ENCODE measurements at regions of chr17 and their contacts with region 1.

Region 1: DNA sequence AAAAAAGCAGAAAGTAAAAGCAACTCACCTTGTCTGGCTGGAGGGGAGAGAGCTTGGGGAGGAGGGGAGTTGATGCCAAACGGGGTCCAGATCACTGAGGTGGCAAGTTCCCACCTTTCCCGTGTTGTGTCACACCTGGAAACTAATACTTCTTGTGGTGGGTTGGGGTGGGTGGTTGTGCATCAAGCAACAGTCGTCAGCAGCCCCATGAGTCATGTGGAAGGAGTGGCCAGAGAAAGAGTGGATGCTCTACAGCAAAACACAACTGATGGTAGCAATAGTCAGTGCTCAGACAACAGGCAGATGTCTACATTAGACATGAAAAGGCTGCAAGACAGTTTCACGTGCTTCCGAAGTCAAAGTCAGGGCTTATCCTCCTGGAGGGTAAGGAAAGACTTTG is 35.4 kb downstream of the ARSG start:
- DNase-seq: no peak
- ATAC-seq: no peak
- H3K4me3 ChIP-seq: no peak overlapping the region
- H3K4me3 Mint-ChIP-seq: no peak overlapping the region
- H3K27ac ChIP-seq: no peak overlapping the region
- H3K27ac Mint-ChIP-seq: no peak overlapping the region
- H3K4me1 ChIP-seq: peaks cover 0 to 14% of the 10 kb centered on the region in 2 experiments
- H3K4me1 Mint-ChIP-seq: peaks cover 23 to 35% (median 26%) of the 10 kb centered on the region in 3 donors
- H3K27me3 ChIP-seq: peaks cover 0 to 4% of the 10 kb centered on the region in 2 experiments
- H3K27me3 Mint-ChIP-seq: no peaks in the 10 kb centered on the region

Region 2: DNA sequence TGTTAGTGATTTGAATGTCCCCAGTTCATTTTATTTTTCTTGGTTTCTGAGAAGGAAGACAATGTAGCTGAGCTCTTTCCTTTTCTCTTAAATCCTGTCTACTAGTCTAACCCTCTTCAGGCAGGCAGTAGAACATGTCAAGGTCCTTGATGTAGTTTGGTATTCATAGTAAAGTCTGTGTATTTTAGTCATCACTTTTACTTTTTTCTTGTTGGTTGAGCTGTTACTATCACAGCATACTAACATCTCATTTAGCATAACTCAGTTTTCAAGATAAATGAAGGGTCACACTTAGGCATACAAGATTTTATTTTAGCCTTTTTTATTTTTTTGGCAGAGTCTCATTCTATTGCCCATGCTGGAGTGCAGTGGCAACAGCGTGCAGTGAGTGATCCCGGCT is 220.6 kb before region 1 on chr17:
- CTCF ChIA-PET with region 1: no interaction called
- POLR2A ChIA-PET with region 1: interaction called in 1 of 2 experiments, 13 read pairs
- DNase-seq: no peak
- ATAC-seq: no peak
- H3K4me3 ChIP-seq: no peak overlapping the region
- H3K4me3 Mint-ChIP-seq: no peak overlapping the region
- H3K27ac ChIP-seq: no peak overlapping the region
- H3K27ac Mint-ChIP-seq: peak overlapping the region; percentile 2 to 53
- H3K4me1 ChIP-seq: peaks cover 11 to 18% of the 10 kb centered on the region in 2 experiments
- H3K4me1 Mint-ChIP-seq: peaks cover 54 to 61% (median 55%) of the 10 kb centered on the region in 3 donors
- H3K27me3 ChIP-seq: no peaks in the 10 kb centered on the region
- H3K27me3 Mint-ChIP-seq: no peaks in the 10 kb centered on the region

Region 3: GRCh38 chr17:68260051-68260762 is 66.5 kb before region 1 on chr17:
- CTCF ChIA-PET with region 1: interaction called in 1 of 2 experiments, 10 read pairs
- POLR2A ChIA-PET with region 1: no interaction called
- DNase-seq: no peak
- ATAC-seq: no peak
- H3K4me3 ChIP-seq: no peak overlapping the region
- H3K4me3 Mint-ChIP-seq: peak overlapping the region in 1 of 3 donors; percentile 68
- H3K27ac ChIP-seq: peak overlapping the region; percentile 89
- H3K27ac Mint-ChIP-seq: peak overlapping the region; percentile 89 to 92
- H3K4me1 ChIP-seq: peaks cover 32 to 52% of the 10 kb centered on the region in 2 experiments
- H3K4me1 Mint-ChIP-seq: peaks cover 58 to 68% (median 66%) of the 10 kb centered on the region in 3 donors
- H3K27me3 ChIP-seq: no peaks in the 10 kb centered on the region
- H3K27me3 Mint-ChIP-seq: no peaks in the 10 kb centered on the region